ENCODE measurements at regions of chr2 and their contacts with region 1.

Region 1: DNA sequence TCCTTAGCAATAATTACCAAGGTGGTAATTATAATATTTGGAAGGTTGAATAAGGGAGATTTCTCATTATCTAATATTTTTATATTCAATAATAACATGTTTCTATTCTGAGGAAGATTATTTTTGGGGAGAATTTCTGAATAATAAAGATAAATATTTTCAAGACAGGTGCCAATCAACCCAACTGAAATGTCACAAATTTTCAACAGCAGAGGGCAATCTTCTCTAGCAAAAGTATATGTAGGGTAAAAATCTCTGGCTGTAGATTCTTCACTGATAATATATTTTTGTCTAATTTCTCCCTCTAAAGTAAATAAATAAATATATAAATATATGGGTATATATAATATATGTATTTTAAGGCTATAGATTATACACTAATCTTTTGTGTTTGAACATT is 1187.2 kb upstream of the CRIM1 start:
- DNase-seq: no peak
- H3K4me3 ChIP-seq: no peak overlapping the region
- H3K27ac ChIP-seq: no peak overlapping the region
- H3K4me1 ChIP-seq: no peaks in the 10 kb centered on the region
- H3K27me3 ChIP-seq: no peaks in the 10 kb centered on the region
- CTCF ChIP-seq: peak in 1 of 2 donors; percentile 32

Region 2: DNA sequence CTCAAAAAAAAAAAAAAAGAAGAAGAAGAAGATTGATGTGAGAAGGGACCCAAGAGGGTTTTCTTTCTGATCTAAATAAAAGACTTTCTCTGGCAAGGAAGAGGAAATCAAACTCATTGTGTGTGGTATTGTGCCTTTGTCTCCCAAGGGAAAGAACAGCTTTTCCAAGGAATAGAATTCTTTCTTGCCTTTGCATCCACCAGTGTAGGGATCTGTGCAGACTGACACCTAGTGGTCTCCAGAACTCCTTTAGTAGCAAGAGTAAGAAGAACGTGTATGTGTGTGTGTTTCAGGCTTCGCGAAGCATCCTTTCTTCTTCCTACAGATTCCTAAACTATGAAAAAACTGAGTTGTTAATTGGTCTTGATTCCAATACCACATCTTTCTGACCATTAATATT is 1153.8 kb after region 1 on chr2:
- CTCF ChIA-PET with region 1: no interaction called
- dilution Hi-C with region 1: no loop called
- in situ Hi-C with region 1: no loop called
- intact Hi-C with region 1: loop called (anchors 10 kb)
- DNase-seq: peak; percentile 42
- H3K4me3 ChIP-seq: no peak overlapping the region
- H3K27ac ChIP-seq: no peak overlapping the region
- H3K4me1 ChIP-seq: no peaks in the 10 kb centered on the region
- H3K27me3 ChIP-seq: no peaks in the 10 kb centered on the region
- CTCF ChIP-seq: peak; percentile 53 to 77

Measured in mammary epithelial cell (primary cell).